Activated B cell treated with CpG ODN at 0.5 μM for 24 hours (primary cell): ENCODE measurements at regions of chr11 and their contacts with region 1.

Region 1: DNA sequence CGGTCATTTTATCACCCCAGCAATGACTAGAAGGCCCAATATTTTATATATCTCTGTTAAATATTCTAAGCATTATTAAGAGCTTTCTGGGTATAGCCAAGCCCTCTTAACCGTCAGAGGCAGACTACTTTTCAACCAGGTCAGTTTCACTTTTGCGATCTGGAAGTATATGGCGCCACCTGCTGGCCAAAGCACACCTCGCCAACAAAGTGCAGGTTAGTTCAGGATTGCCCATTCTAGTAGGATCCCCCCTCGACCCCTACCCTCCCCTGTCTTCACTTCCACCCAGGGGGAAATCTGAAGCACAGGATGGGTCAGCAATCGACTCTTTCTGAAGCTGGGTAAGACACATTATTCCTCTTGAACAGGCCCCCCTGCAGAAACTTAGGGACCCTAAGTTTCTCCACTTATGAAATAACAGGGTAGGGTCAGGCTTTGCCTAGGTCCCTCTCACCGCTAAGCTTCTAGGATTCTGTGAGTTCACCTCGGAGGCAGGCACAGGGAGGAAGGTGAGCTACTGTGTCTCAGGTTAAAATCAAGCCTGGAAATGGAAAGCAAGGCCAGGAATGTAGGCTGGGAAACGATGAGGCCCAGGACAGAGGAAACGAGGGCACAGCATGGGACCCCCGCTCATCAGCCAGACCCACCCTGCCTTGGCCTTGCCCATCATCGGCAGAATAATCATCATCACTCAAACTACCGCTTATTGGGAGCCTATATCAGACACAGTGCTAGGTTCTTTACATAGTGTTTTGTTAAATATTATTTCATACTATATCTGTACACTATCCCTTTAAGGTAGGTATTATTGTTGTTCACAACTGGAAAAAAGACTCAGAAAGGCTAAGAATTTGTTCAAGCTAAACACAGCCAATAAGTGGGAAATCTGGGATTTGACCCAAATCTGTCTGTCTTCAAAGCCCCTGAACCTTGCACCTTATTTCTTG is 35.6 kb downstream of the KCNJ1 start:
- DNase-seq: peak; percentile 75
- ATAC-seq: peak; percentile 92
- H3K4me3 Mint-ChIP-seq: peak overlapping the region; percentile 70
- H3K27ac Mint-ChIP-seq: peak overlapping the region; percentile 91
- H3K4me1 Mint-ChIP-seq: peaks cover 80% of the 10 kb centered on the region
- H3K27me3 Mint-ChIP-seq: no peaks in the 10 kb centered on the region
- CTCF ChIP-seq: no peak

Region 2: DNA sequence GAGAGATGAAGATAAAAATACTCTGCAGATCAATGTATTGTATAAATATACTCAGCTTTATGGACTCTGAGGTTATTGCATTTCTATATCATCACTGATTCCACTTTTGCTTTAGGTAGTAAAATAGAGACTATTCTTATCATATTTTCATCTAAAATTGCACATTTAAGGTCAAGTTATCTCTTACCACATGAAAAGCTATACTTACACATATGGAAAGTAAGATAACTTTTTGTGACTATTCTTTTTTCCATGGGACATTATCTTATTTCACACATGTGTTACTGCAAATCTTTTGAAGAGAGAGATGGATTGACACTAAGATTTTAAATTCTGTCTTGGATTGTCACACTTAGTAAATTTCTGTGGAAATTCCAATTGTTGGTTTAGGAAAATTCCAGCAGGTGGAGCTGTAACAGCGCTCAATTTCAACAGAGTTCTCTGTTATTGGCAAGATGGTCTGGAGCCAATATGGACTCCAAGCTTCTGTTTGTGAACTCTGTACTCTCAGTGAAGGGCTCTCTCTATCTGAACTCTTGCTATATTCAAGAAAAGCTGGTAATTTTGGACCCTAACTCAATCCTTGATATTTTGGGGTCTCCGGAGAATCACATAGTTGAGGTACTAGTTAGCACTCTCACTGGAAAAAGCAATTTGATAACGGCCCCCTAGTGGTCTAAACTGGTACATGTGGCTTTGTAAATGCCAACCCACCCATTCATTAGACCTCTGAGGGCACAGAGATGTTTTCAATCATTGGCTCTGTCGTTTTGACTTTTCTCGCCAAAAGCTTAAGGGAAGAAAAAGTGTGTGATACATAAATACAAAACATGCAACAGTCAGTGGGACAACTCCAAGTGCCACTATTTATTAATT is 673.8 kb before region 1 on chr11:
- CTCF ChIA-PET with region 1: interaction called, 52 read pairs
- POLR2A ChIA-PET with region 1: interaction called, 3 read pairs
- intact Hi-C with region 1: loop called (anchors 1 kb)
- DNase-seq: no peak
- ATAC-seq: peak; percentile 92
- H3K4me3 Mint-ChIP-seq: peak overlapping the region; percentile 82
- H3K27ac Mint-ChIP-seq: peak overlapping the region; percentile 50
- H3K4me1 Mint-ChIP-seq: no peaks in the 10 kb centered on the region
- H3K27me3 Mint-ChIP-seq: peaks cover 19% of the 10 kb centered on the region
- CTCF ChIP-seq: no peak

Region 3: DNA sequence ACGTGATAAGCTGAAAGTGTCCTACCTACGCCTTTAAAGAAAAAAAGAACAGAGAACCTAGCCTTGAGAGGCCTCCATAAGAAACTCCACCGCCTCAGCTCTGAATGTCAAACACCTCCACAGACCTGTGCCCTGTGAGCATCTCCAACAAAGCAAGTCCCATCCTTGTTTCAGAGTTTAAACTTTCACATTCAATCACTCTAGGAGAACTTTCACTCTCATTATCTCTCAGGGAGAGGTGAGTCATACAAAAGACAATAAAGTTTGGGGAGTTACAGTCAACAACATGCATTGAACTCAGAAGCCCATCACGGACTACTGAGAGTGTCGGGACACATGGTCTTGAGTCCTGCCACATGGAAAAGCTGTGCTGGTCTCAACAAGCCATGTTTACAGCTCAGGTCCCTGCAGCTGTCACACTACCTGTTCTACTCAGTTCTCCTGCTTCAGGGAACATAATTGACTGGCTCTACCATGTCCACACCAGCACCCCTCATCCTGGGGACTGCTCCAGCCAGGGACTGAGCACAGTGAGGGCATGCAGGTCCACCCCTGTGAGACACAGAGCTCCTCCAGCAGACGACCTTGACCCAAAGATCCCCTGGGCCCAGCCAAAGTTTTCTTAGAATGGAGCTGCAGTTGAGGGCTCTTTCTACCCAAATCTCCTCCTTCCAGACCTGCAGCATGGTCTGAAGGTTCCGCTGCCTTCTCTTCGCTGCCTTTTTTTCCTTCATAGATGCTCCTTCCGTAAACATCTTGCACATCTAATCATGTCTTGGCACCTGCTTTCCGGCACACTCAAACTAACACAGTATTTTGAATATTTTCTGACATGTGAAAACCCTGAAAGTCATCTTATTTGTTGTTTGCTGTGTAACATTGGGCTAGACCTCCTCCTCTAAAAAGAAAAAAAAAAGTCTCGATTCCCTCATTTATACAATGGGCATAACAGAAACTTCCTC is 359.0 kb before region 1 on chr11:
- CTCF ChIA-PET with region 1: no interaction called
- POLR2A ChIA-PET with region 1: interaction called, 8 read pairs
- intact Hi-C with region 1: loop called (anchors 5 kb)
- DNase-seq: no peak
- ATAC-seq: peak; percentile 26
- H3K4me3 Mint-ChIP-seq: peak overlapping the region; percentile 60
- H3K27ac Mint-ChIP-seq: peak overlapping the region; percentile 89
- H3K4me1 Mint-ChIP-seq: peaks cover 100% of the 10 kb centered on the region
- H3K27me3 Mint-ChIP-seq: no peaks in the 10 kb centered on the region
- CTCF ChIP-seq: no peak

Region 4: GRCh38 chr11:128603752-128604414 is 227.6 kb before region 1 on chr11:
- CTCF ChIA-PET with region 1: interaction called, 10 read pairs
- POLR2A ChIA-PET with region 1: interaction called, 3 read pairs
- intact Hi-C with region 1: no loop called
- DNase-seq: no peak
- ATAC-seq: peak; percentile 63
- H3K4me3 Mint-ChIP-seq: no peak overlapping the region
- H3K27ac Mint-ChIP-seq: peak overlapping the region; percentile 78
- H3K4me1 Mint-ChIP-seq: peaks cover 70% of the 10 kb centered on the region
- H3K27me3 Mint-ChIP-seq: no peaks in the 10 kb centered on the region
- CTCF ChIP-seq: no peak

Region 5: DNA sequence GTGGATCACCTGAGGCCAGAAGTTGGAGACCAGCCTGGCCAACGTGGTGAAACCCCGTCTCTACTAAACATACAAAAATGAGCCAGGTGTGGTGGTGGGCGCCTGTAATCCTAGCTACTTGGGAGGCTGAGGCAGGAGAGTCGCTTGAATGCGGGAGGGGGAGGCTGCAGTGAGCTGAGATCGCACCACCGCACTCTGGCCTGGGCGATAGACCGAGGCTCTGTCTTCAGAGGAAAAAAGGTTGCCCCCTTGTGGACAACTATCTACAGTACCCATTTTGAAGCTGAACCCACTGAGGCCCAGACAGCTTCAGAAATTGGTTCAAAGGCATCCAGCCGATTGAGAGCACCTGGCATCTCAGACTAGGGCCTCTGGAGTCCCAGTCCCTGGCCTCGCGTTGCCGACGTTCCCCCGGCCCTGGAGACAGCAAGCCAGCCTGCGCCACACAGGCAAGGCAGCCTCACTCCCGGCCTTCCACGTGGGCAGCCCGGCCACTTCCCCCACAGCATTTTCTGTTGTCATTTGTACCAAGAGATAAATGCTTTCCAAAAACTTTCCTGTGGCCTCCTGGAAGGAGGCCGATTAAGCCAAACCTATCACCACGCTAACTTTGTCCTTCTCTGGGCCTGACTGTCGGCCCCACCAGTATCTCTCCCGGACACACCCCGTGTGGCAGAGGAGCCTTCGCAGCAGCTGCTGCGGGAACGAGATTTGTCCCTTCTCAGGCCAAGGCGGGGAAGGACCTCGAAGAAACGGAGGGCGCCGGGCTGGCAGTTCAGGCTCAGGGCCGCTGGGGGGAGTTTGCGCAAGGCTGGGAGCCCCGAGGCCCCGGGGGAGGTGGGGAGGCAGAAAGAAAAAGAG is 54.8 kb before region 1 on chr11:
- CTCF ChIA-PET with region 1: interaction called, 22 read pairs
- POLR2A ChIA-PET with region 1: interaction called, 3 read pairs
- intact Hi-C with region 1: loop called (anchors 5 kb)
- DNase-seq: no peak
- ATAC-seq: no peak
- H3K4me3 Mint-ChIP-seq: no peak overlapping the region
- H3K27ac Mint-ChIP-seq: peak overlapping the region; percentile 56
- H3K4me1 Mint-ChIP-seq: peaks cover 42% of the 10 kb centered on the region
- H3K27me3 Mint-ChIP-seq: no peaks in the 10 kb centered on the region
- CTCF ChIP-seq: no peak

Region 6: GRCh38 chr11:128841461-128842072 is 10.1 kb after region 1 on chr11:
- CTCF ChIA-PET with region 1: interaction called, 26 read pairs
- POLR2A ChIA-PET with region 1: interaction called, 12 read pairs
- intact Hi-C with region 1: loop called (anchors 2 kb)
- DNase-seq: no peak
- ATAC-seq: peak; percentile 77
- H3K4me3 Mint-ChIP-seq: peak overlapping the region; percentile 36
- H3K27ac Mint-ChIP-seq: peak overlapping the region; percentile 86
- H3K4me1 Mint-ChIP-seq: peaks cover 100% of the 10 kb centered on the region
- H3K27me3 Mint-ChIP-seq: no peaks in the 10 kb centered on the region
- CTCF ChIP-seq: no peak

Region 7: DNA sequence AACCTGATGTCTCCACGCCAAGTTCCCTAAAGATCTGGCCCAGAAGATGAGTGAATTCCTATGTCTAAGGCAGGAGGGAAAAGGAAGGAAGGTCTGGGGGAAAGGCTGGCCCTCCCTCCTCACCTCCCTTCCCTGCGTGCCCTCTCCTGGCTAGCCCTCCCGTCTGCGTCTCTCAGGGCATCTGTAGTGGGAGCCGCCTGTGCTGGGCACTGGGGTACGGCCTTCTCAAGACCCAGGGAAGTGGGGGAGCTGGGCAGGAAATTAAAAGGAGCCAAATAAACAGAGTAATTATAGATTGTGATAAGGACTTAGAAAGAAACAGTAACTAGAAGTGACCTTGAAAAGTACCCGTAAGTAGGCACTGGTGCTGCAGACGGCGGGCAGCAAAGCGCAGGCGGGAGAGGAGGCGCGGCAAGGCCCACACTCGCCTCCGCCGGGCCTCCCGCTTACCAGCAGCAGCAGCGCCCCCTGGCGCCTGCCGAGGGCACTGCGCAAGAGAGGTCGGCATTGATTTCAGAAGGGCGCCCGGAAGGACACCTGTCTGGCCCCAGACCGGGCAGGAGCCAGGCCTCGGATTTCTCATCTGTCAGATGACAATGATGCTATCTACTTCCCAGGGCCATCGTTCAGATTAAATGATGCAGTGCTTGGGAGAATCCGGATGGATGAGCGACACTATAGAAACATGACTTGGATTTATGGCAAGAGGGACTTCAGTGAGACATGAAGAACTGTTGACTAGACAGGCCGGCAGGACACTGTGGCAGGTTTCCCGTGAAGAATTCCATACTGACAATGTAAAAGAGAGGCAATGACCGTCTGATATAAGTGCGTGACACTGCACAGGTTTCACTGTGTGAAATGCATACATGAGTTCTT is 28.4 kb after region 1 on chr11:
- CTCF ChIA-PET with region 1: interaction called, 15 read pairs
- POLR2A ChIA-PET with region 1: no interaction called
- intact Hi-C with region 1: loop called (anchors 1 kb)
- DNase-seq: peak; percentile 77
- ATAC-seq: peak; percentile 98
- H3K4me3 Mint-ChIP-seq: no peak overlapping the region
- H3K27ac Mint-ChIP-seq: no peak overlapping the region
- H3K4me1 Mint-ChIP-seq: peaks cover 16% of the 10 kb centered on the region
- H3K27me3 Mint-ChIP-seq: no peaks in the 10 kb centered on the region
- CTCF ChIP-seq: peak; percentile 54